Activated naive CD4-positive, alpha-beta T cell treated with anti-CD3 and anti-CD28 coated beads for 36 hours (primary cell): ENCODE measurements at regions of chr19 and their contacts with region 1.

Region 1: DNA sequence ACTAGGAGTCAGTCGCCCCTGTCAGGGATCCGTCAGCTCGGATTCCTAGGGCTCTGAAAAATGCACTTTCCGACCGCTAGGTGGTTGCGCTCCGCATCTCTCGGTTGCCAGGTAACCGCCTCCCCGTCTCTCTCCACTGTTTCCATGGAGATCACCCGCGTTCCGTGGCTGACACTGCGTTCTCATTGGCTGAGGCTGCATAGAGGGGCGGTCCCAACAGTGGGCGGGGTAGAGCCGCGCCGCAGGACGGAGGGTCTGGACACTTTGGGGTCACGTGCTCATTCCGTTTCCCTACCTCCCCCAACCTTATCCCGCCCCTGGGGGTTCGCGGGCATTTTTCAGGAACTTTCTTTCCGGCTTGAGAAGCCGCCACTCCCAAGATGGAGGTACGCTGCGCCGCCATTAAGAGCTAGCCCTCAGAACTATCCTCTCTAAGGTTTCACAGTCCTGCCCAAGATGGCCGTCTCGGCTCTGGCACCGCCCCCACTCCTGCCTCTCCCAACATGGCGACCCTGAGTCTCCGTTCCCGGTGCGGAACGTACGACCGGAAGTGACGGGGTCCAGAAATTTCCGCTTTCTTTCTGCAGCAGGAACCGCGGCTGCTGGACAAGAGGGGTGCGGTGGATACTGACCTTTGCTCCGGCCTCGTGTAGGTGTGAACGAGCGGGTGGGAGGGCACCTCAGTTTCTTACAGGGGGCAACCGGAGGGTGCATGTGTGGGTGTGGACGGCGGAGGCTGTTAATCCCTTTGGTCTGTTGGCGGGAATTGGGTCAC is at the starts of genes ODAD3 and PRKCSH:
- DNase-seq: peak; percentile 99
- H3K4me3 Mint-ChIP-seq: peak within 1 kb of the TSS; percentile 100
- H3K27ac Mint-ChIP-seq: peak within 1 kb of the TSS; percentile 93
- H3K4me1 Mint-ChIP-seq: peaks cover 22% of the 10 kb centered on the region
- H3K27me3 Mint-ChIP-seq: no peaks in the 10 kb centered on the region
- total RNA-seq, gene ODAD3: 0.15 to 0.19 TPM
- total RNA-seq, gene PRKCSH: 234 to 237 TPM

Region 2: GRCh38 chr19:11090054-11090900 is 345.0 kb before region 1 on chr19:
- CTCF ChIA-PET with region 1: no interaction called
- intact Hi-C with region 1: loop called (anchors 1 kb)
- DNase-seq: peak; percentile 99
- H3K4me3 Mint-ChIP-seq: peak overlapping the region; percentile 94
- H3K27ac Mint-ChIP-seq: peak overlapping the region; percentile 99
- H3K4me1 Mint-ChIP-seq: peaks cover 48% of the 10 kb centered on the region
- H3K27me3 Mint-ChIP-seq: no peaks in the 10 kb centered on the region

Region 3: GRCh38 chr19:11346092-11346940 is 88.9 kb before region 1 on chr19 and contains the starts of genes CCDC159 and TMEM205:
- CTCF ChIA-PET with region 1: no interaction called
- intact Hi-C with region 1: loop called (anchors 1 kb)
- DNase-seq: peak; percentile 100
- H3K4me3 Mint-ChIP-seq: peak within 1 kb of the TSS; percentile 97
- H3K27ac Mint-ChIP-seq: peak within 1 kb of the TSS; percentile 86
- H3K4me1 Mint-ChIP-seq: peaks cover 26% of the 10 kb centered on the region
- H3K27me3 Mint-ChIP-seq: no peaks in the 10 kb centered on the region
- total RNA-seq, gene CCDC159: 15.2 to 16.5 TPM
- total RNA-seq, gene TMEM205: 21.4 to 24.2 TPM

Region 4: GRCh38 chr19:11361037-11361770 is 74.0 kb before region 1 on chr19:
- CTCF ChIA-PET with region 1: no interaction called
- intact Hi-C with region 1: no loop called
- DNase-seq: no peak
- H3K4me3 Mint-ChIP-seq: no peak overlapping the region
- H3K27ac Mint-ChIP-seq: no peak overlapping the region
- H3K4me1 Mint-ChIP-seq: peaks cover 2% of the 10 kb centered on the region
- H3K27me3 Mint-ChIP-seq: peaks cover under 1% of the 10 kb centered on the region

Region 5: GRCh38 chr19:11380653-11381534 is 54.4 kb before region 1 on chr19:
- CTCF ChIA-PET with region 1: interaction called, 5 read pairs
- intact Hi-C with region 1: loop called (anchors 1 kb)
- DNase-seq: peak; percentile 98
- H3K4me3 Mint-ChIP-seq: peak overlapping the region; percentile 85
- H3K27ac Mint-ChIP-seq: peak overlapping the region; percentile 92
- H3K4me1 Mint-ChIP-seq: peaks cover 52% of the 10 kb centered on the region
- H3K27me3 Mint-ChIP-seq: peaks cover 8% of the 10 kb centered on the region

Region 6: DNA sequence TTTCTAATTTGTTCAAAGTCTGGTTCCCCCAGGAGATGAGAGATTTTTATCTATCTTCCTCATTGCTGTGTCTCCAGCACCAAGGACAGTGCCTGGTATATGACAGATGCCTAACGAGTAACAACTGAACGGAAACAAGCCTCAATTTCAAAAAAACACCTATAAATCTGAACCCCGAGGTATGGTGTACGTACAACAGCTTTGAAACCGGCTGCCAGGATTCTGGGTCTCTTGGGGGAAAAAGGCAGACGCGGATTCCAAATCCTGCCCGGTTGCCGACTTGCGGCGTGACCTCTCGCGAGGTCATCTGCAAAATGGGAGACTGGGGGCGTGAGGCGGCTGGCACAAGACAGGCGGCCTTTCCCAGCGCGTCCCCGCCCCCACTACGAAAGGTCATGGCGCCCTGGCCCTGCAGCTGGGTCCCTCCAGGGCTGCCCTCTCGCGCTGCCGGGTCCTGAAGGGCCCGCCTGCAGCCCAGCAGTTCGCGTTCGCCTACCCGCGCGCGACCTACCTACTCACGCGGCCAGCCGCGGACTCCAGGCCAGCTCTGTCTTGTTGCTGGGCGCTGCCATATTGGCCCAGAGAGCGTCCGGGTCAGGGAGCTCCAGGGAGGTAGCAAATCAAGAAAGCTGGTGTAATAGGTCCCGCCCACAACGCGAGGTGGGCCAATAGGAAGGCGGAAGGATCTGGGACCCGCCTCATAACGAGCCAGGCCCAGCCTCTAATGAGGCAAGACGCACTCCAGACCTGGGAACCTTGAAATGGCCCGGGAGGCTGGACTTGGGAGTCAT is 93.5 kb after region 1 on chr19 and contains the start of gene ECSIT:
- CTCF ChIA-PET with region 1: no interaction called
- intact Hi-C with region 1: loop called (anchors 1 kb)
- DNase-seq: peak; percentile 97
- H3K4me3 Mint-ChIP-seq: peak within 1 kb of the TSS; percentile 97
- H3K27ac Mint-ChIP-seq: peak within 1 kb of the TSS; percentile 90
- H3K4me1 Mint-ChIP-seq: peaks cover 26% of the 10 kb centered on the region
- H3K27me3 Mint-ChIP-seq: no peaks in the 10 kb centered on the region
- total RNA-seq, gene ECSIT: 42.6 to 46.0 TPM